Heart right ventricle (tissue), 16 donors: ENCODE measurements at regions of chr17 and their contacts with region 1.

Region 1: GRCh38 chr17:28726226-28727130 is at the start of gene TLCD1:
- DNase-seq: peak; percentile 90 to 92
- ATAC-seq: peak; percentile 71 to 88 (median 82)
- H3K4me3 ChIP-seq: peak within 1 kb of the TSS; percentile 50 to 89 (median 78)
- H3K27ac ChIP-seq: peak within 1 kb of the TSS in 9 of 10 donors; percentile 5 to 98 (median 90)
- H3K4me1 ChIP-seq: peaks cover 19 to 65% (median 39%) of the 10 kb centered on the region in 9 donors
- H3K27me3 ChIP-seq: no peaks in the 10 kb centered on the region
- CTCF ChIP-seq: peak; percentile 98 to 100 (median 99)
- total RNA-seq, gene TLCD1: 0.36 to 1.8 (median 0.89) TPM

Region 2: DNA sequence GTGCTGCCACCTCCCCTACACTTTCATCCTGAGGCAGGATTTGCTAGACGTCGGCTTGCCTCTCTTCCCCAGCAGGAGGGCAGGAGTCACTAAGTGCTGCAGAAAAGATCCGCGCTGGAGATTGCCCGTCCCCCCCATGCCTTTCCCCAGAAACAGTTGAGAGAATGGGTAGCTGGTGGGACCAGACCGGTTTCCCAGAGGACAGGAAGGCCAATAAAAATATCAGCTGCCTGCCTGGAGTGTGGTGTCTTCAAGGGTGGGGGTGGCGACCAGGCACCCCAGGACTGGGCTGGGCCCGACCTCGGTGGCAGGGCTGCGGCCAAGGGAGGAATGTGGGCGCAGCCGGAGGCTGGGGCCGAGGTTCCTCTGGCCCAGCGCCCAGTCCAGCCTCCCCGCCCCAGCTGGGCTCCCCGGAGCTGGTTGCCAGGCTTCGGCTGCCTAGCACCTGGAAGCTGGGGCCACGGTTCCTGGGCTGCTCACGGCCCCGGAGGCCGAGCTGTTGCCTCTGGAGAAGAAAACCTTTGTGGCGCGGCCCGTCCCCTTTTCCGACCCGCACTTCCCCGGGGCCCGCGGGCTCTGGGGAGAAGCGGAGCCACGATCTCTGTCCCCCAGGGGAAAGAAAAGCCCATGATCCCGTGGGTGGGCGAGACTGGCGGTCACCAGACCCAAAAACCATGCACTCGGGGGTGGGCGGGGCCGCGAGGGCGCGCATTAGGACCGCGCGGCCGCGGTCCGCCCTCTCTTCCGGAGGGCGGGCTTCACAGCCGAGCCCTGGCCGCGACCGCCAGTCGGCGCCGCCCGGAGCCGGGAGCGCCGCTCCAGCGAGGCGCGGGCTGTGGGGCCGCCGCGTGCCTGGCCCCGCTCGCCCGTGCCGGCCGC is 17.0 kb after region 1 on chr17 and contains the start of gene TRAF4:
- intact Hi-C with region 1: loop called in 2 of 10 experiments (anchors 2 kb)
- DNase-seq: peak; percentile 74 to 79
- ATAC-seq: peak; percentile 87 to 95 (median 88)
- H3K4me3 ChIP-seq: peak within 1 kb of the TSS; percentile 35 to 88 (median 72)
- H3K27ac ChIP-seq: peak within 1 kb of the TSS; percentile 21 to 91 (median 84)
- H3K4me1 ChIP-seq: peaks cover 6 to 61% (median 40%) of the 10 kb centered on the region in 9 donors
- H3K27me3 ChIP-seq: peaks cover 0 to 5% (median 0%) of the 10 kb centered on the region in 7 donors
- CTCF ChIP-seq: peak in 3 of 9 donors; percentile 34 to 59 (median 41)
- total RNA-seq, gene TRAF4: 1.3 to 6.4 (median 3.8) TPM

Region 3: DNA sequence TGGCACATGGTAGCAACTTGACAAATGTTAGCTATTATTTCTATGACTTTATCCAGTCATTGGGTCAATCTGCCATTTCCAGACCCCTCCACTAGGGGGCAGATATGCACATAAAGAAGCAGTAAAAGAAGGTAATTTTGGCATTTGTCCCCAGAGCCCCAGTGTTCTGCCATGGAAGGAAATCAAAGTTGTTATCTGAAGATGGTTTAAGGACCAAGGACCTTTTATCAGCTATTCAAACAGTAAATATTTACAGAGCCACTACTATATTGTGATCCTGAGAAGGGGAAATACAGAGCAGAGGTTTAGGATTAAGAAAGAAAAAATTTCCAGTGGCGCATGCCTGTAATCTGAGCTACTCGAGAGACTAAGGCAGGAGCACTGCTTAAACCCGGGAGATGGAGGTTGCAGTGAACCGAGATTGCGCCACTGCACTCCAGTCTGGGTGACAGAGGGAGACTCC is 37.4 kb after region 1 on chr17:
- intact Hi-C with region 1: loop called in 1 of 10 experiments (anchors 5 kb)
- DNase-seq: peak in 1 of 2 donors; percentile 83
- ATAC-seq: peak in 6 of 8 donors; percentile 25 to 59 (median 37)
- H3K4me3 ChIP-seq: no peak overlapping the region
- H3K27ac ChIP-seq: no peak overlapping the region
- H3K4me1 ChIP-seq: peaks cover 2 to 29% (median 26%) of the 10 kb centered on the region in 9 donors
- H3K27me3 ChIP-seq: no peaks in the 10 kb centered on the region
- CTCF ChIP-seq: peak; percentile 77 to 94 (median 91)

Region 4: DNA sequence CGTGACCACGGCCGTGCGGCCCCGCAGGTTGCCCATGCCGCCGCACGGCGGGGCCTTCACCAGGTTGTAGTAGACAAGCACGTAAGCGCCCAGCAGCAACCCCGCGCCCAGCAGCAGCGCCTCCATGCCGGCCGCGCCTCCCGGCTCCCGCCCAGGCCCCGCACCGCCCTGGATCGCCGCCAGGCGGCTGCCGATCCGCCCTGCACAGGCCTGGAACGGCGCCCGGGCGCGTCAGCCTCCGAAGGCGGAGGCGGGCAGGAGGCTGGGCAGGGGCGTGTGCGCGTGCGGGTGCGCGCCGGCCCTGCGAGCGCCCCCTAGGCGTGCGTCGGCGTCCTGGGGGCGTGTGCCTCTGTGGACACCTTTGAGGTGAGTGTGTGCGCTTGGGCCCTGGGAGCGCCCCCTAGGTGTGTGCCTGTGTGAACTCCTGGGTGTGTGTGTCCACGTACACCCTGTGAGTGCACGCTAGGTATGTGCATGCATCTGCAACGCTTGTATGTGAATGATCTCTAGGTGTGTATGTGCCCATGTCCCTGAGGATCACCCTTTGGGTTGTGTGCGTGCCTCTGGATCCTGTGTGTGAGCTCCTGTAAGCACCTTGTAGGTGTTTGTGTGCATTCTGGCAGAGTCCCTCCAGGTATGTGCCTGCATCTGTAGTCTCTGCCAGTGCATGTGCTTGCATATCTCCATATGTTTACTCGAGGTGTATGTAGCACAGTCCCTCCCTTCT is 176.5 kb after region 1 on chr17 and contains the start of gene DHRS13:
- intact Hi-C with region 1: loop called in 1 of 10 experiments (anchors 5 kb)
- DNase-seq: peak; percentile 85 to 93
- ATAC-seq: peak; percentile 89 to 94 (median 92)
- H3K4me3 ChIP-seq: peak within 1 kb of the TSS; percentile 19 to 83 (median 73)
- H3K27ac ChIP-seq: peak within 1 kb of the TSS; percentile 48 to 88 (median 78)
- H3K4me1 ChIP-seq: peaks cover 6 to 49% (median 22%) of the 10 kb centered on the region in 9 donors
- H3K27me3 ChIP-seq: no peaks in the 10 kb centered on the region
- CTCF ChIP-seq: peak; percentile 62 to 94 (median 86)
- total RNA-seq, gene DHRS13: 1.1 to 5.6 (median 2.2) TPM

Region 5: DNA sequence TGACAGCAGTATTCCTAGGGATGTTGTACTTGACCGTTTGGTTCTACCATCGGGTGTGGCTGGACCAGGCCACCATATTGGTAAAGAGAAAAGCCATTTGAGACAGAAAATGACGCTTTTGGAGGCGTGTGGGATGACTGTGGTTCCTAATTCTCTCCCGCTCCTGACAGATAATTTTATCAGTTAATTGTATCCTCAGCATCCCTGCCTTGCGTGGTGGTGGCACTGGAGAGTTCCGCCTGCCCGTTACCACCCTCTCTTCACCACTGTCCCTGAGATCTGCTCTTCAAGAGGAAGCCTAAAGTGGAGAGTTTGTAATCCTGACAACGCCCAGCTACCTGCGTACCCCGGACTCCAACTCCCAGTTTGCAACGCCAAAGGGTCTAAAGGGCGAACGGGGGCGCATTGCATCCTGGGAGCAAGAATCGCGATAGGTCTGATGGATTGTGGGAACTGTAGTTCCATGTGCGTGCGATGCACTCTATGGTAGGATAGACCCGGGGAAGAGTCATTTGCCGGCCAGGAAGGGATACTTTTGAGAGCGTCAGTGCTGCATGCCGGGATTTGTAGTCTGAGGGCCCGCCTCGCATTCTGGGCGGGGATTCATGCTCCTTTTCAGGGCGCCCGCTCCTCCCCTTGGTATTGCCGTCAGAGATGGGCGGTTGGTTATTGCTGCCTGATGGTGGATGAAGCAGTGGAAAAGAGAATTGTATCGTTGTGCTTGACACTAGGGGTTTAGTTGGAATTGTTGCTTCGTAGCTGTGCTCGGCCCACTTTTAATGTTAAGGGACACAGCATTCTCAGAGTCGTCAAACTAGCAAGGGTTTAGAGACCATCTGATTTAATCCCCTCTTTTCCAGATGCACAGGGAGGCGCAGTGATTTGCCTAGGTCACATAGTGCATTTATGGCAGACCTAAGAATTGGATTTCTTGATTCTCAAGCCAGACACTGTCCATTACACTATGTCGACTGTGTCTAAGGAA is 225.8 kb after region 1 on chr17:
- intact Hi-C with region 1: loop called in 5 of 10 experiments (anchors 2 to 5 kb)
- DNase-seq: peak; percentile 92 to 98
- ATAC-seq: peak; percentile 81 to 92 (median 87)
- H3K4me3 ChIP-seq: peak overlapping the region; percentile 40 to 93 (median 74)
- H3K27ac ChIP-seq: peak overlapping the region; percentile 87 to 99 (median 98)
- H3K4me1 ChIP-seq: peaks cover 8 to 28% (median 25%) of the 10 kb centered on the region in 9 donors
- H3K27me3 ChIP-seq: no peaks in the 10 kb centered on the region
- CTCF ChIP-seq: peak in 1 of 9 donors; percentile 8

Region 6: DNA sequence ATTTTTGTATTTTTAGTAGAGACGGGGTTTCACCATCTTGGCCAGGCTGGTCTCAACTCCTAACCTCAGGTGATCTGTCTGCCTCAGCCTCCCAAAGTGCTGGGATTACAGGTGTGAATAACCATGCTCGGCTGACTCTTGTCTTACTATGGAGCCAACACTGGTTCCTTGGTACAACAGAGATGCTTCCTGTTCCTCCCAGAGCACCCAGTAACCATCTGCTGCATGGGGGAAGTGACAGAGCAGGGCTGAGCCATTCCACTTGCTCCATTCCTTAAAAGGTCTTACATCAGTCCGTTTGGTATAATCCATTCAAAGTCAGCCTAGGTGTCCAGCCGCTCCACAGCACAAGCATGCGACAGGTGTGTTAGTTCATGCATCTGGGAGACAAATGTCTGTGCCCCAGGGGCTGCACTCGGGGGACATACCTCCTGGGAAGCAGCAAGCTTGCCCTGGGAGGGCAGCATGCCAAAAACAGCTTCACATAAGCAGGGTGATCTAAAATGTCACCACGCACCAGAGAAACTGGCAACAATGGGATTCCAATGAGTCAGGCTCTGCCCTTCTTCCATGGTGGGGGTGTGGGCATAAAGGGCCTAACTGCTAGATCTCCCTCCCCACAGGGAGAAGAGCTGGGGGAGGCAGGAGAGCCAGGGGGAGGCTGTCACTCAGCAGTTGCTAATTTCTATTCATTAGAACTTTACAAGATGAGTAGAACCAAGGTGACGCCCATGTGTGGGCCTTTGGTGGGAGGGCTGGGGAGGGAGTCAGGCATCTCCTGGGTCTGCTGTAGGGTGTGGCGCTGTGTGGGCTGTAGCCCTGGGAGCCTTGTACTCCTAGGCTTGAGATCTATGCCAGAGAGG is 351.9 kb after region 1 on chr17:
- intact Hi-C with region 1: no loop called
- DNase-seq: peak in 1 of 2 donors; percentile 35
- ATAC-seq: peak in 6 of 8 donors; percentile 29 to 62 (median 50)
- H3K4me3 ChIP-seq: no peak overlapping the region
- H3K27ac ChIP-seq: peak overlapping the region in 2 of 10 donors; percentile 20 to 26
- H3K4me1 ChIP-seq: peaks cover 3 to 40% (median 14%) of the 10 kb centered on the region in 9 donors
- H3K27me3 ChIP-seq: no peaks in the 10 kb centered on the region
- CTCF ChIP-seq: no peak

Region 7: GRCh38 chr17:29568331-29569244 is 842.1 kb after region 1 on chr17 and contains the start of gene TP53I13:
- intact Hi-C with region 1: no loop called
- DNase-seq: peak; percentile 87 to 89
- ATAC-seq: peak; percentile 61 to 82 (median 74)
- H3K4me3 ChIP-seq: peak within 1 kb of the TSS; percentile 68 to 92 (median 84)
- H3K27ac ChIP-seq: peak within 1 kb of the TSS; percentile 83 to 94 (median 91)
- H3K4me1 ChIP-seq: peaks cover 14 to 68% (median 52%) of the 10 kb centered on the region in 9 donors
- H3K27me3 ChIP-seq: no peaks in the 10 kb centered on the region
- CTCF ChIP-seq: no peak
- total RNA-seq, gene TP53I13: 24.0 to 41.6 (median 30.2) TPM